ENCODE measurements at regions of chr6 and their contacts with region 1.

Region 1: GRCh38 chr6:100593522-100593921 is 128.8 kb upstream of the SIM1 start:
- DNase-seq: no peak
- CTCF ChIP-seq: no peak

Region 2: DNA sequence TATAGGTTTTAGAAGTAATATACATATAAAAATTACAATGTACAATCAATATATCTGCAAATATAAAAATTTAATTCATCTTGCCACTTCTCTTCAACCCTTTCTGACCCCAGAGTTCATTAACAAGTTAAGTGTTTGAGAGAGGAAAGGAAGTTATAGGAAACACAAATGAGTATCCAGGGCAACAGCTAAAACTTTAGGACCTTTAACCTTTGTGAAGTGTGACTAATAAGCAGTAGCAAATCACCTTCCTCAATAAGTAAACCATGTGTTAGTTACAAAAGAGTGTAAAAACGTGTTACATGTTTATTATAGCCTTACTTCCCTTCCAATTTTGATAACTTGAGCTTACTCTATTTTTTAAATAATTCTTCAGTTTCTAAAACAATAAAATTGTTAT is 55.4 kb before region 1 on chr6:
- CTCF ChIA-PET with region 1: no interaction called
- POLR2A ChIA-PET with region 1: no interaction called
- DNase-seq: no peak
- CTCF ChIP-seq: no peak

Region 3: DNA sequence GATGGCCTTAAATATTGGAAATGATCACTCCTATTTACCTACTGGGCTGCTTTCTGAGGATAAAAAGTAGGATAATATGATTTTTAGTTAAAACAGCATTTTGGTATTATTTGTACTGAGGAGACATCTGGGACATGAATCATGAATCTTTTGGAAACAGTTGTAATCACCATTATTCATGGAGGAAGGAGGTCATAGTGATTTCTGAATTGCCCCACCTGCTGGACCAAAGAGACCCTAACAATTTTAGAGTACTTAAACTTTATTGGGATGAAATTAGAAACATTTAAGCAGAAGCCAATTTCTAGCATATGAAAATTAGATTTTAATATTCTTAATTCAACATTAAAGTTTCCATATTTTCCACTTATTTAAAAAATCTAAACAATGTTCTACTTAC is 20.4 kb before region 1 on chr6:
- CTCF ChIA-PET with region 1: interaction called, 10 read pairs
- POLR2A ChIA-PET with region 1: no interaction called
- DNase-seq: no peak
- CTCF ChIP-seq: peak; percentile 7